ENCODE measurements at regions of chr12 and their contacts with region 1.

Region 1: DNA sequence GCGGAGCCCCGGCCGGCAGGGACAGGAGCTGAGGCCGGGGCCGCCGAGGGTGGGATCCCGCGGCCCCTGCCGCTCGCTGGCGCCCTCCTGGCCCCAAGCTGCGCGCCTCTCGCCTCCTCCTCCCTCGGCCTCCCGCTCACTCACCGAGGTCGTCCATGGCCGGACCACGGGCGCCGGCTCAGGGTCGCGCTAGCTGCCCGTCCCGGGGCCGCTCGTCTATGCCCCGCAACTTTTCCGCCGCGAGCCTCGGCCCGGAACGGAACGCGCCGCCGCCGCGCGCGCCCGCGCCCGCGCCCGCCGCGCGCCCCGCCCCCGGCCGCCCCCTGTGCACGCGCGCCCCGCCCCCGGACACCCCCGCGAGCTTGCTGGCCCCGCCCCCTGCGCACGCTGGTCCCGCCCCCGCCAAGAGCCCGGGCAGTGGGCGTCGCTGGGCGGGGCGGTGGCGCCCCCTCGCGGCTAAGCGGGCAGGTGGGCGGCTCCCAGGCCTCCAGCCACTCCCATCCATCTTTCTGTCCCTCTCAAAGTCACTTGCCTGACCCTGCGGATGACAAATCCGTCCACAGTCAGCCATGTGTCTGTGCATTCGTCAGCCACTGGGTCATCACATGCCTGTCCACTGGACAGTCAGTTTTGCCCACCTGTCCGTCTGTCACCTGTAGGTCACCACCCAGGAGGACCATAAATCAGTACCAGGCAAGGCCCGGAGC is at the start of gene PXN:
- H3K4me3 ChIP-seq: peak within 1 kb of the TSS; percentile 90
- H3K27ac ChIP-seq: peak within 1 kb of the TSS; percentile 65; the same call in 1 of the 2 replicates
- H3K4me1 ChIP-seq: peaks cover 4% of the 10 kb centered on the region; the same call in 1 of the 2 replicates
- CTCF ChIP-seq: peak; percentile 69

Region 2: GRCh38 chr12:120234643-120235368 is 30.8 kb before region 1 on chr12:
- CTCF ChIA-PET with region 1: interaction called, 581 read pairs
- POLR2A ChIA-PET with region 1: interaction called, 126 read pairs
- H3K4me3 ChIP-seq: no peak overlapping the region
- H3K27ac ChIP-seq: peak overlapping the region; percentile 11; the same call in 1 of the 2 replicates
- H3K4me1 ChIP-seq: peaks cover 36% of the 10 kb centered on the region
- CTCF ChIP-seq: peak; percentile 48

Region 3: GRCh38 chr12:120276734-120277133 is 11.1 kb after region 1 on chr12:
- CTCF ChIA-PET with region 1: interaction called, 16 read pairs
- POLR2A ChIA-PET with region 1: no interaction called
- H3K4me3 ChIP-seq: no peak overlapping the region
- H3K27ac ChIP-seq: no peak overlapping the region
- H3K4me1 ChIP-seq: no peaks in the 10 kb centered on the region
- CTCF ChIP-seq: no peak

Region 4: GRCh38 chr12:120286796-120287465 is 21.3 kb after region 1 on chr12:
- CTCF ChIA-PET with region 1: interaction called, 11 read pairs
- POLR2A ChIA-PET with region 1: interaction called, 23 read pairs
- H3K4me3 ChIP-seq: no peak overlapping the region
- H3K27ac ChIP-seq: no peak overlapping the region
- H3K4me1 ChIP-seq: no peaks in the 10 kb centered on the region
- CTCF ChIP-seq: no peak

Region 5: DNA sequence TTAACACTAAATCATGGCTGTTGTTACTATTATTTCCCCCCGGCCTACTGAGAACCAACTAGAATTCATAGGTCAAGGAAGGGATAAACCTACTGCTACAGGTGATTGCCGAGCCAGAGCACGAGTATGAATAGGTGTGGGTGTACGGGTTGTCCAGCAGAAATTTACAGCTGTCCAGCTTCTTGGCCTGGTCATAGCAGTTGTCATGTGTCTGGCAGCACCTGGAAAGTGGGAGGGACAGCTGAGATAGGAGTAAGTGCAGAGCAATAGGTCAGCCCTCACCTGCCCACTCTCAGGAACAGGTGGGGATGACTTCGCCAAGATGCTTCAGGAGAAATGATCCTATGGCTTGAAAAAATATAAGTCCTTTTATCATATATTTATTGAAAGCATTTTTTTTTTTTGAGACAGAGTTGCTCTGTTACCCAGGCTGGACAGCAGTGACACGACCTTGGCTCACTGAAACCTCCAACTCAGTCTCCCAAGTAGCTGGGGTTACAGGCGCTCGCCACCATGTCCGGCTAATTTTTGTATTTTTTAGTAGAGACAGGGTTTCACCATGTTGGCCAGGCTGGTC is 59.3 kb after region 1 on chr12:
- CTCF ChIA-PET with region 1: no interaction called
- POLR2A ChIA-PET with region 1: no interaction called
- H3K4me3 ChIP-seq: no peak overlapping the region
- H3K27ac ChIP-seq: no peak overlapping the region
- H3K4me1 ChIP-seq: no peaks in the 10 kb centered on the region
- CTCF ChIP-seq: no peak